Kidney (tissue), 22 donors: ENCODE measurements at regions of chr9 and their contacts with region 1.

Region 1: GRCh38 chr9:69056191-69056815 is 20.8 kb downstream of the FXN start:
- DNase-seq: no peak
- H3K4me3 ChIP-seq: no peak overlapping the region
- H3K27ac ChIP-seq: no peak overlapping the region
- H3K4me1 ChIP-seq: no peaks in the 10 kb centered on the region
- H3K27me3 ChIP-seq: no peaks in the 10 kb centered on the region
- CTCF ChIP-seq: no peak

Region 2: DNA sequence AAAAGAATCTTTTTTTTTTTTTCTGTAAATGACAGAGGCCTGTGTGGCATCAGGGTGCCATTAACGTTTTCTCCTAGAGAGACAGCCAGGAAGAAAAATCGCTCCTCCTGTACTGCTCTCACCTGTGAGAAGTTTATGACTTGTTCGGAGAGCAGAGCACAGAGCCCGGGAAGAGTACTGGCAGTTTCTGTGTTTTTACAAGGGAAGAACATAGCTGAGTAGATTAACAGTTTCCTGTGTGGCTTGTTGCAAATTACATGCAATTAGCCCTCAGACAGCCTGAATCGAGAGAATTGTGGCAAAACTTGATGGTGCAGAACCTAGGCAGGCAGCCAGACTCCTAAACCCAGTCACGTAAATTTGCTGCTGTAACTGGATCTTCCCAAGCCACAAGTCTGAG is 74.5 kb before region 1 on chr9:
- intact Hi-C with region 1: no loop called
- DNase-seq: peak in 4 of 5 donors; percentile 64 to 94 (median 88)
- H3K4me3 ChIP-seq: no peak overlapping the region
- H3K27ac ChIP-seq: no peak overlapping the region
- H3K4me1 ChIP-seq: no peaks in the 10 kb centered on the region
- H3K27me3 ChIP-seq: no peaks in the 10 kb centered on the region
- CTCF ChIP-seq: no peak

Region 3: DNA sequence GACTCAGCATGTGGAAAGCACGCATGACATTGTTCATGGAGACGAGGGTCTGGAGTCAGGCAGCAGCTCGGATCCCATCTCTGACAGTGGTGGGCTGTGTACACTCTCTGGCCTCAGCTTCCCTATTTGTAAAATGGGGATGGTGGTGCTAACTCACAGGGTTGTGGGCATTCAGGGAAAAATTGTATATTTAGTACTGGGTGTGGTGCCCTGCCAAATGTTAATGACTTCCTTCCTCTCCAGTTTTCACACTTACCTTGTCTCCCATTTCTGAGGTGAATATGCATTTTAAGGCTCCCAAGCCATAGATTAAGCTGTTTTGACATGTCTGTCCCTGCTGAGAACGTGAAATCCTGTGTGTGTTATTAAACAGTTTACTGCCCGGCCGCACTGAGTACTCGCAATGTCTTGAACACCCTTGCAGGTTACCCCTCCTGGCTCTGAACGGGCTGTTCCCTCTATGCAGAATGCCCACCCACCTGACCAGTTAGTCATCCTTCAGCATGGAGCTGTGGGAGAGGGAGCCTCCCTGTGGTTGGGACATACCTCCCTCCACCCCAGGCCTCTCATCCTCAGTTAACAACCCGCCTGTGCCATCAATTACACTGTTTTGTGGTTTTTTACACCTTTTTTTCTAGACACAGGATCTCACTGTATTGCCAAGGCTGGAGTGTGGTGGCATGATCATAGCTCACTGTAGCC is 143.6 kb after region 1 on chr9:
- intact Hi-C with region 1: loop called (anchors 10 kb)
- DNase-seq: peak in 1 of 5 donors; percentile 77
- H3K4me3 ChIP-seq: no peak overlapping the region
- H3K27ac ChIP-seq: no peak overlapping the region
- H3K4me1 ChIP-seq: peaks cover 0 to 6% (median 4%) of the 10 kb centered on the region in 3 donors
- H3K27me3 ChIP-seq: no peaks in the 10 kb centered on the region
- CTCF ChIP-seq: no peak

Region 4: DNA sequence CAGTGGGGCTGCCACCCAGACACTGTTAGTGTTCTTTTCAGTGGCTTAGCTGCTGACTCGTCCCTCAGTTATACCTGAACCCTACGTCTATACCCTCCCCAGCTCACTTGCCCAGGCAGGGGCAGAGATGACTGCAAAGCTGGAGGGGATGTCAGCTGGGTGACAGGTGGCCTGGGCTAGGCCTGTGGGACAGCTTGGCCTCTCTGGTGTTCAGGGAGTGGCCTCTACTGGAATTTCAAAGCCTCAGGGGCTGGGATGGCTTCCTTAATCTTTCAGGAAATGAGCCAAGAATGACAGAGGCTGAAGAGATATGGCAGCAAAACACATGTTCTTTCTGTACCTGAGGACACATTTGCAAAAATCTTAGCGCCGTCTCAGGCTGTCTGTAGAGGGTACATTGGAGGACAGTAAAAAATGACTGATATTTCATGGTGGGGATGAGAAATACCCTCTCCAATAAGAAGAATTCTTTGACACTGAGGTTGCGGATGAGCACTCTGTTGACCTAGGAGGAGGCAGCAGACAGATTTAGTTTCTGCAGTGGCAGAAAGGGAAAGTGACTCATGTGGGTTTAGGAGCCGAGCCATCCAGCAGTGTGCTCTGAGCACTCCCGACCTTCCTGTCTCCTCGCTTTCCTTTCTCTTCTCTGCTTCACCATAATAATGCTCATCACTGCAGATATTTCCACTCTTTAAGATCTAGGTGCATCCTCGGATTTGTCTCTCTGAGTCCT is 323.1 kb after region 1 on chr9:
- intact Hi-C with region 1: no loop called
- DNase-seq: no peak
- H3K4me3 ChIP-seq: no peak overlapping the region
- H3K27ac ChIP-seq: no peak overlapping the region
- H3K4me1 ChIP-seq: no peaks in the 10 kb centered on the region
- H3K27me3 ChIP-seq: no peaks in the 10 kb centered on the region
- CTCF ChIP-seq: no peak